GM10248 (cell line): ENCODE measurements at regions of chr14 and their contacts with region 1.

Region 1: GRCh38 chr14:75831458-75831857 is 150.3 kb downstream of the TGFB3 start:
- DNase-seq: no peak
- CTCF ChIP-seq: no peak

Region 2: GRCh38 chr14:75002392-75003249 is 828.8 kb before region 1 on chr14 and contains the start of gene EIF2B2:
- CTCF ChIA-PET with region 1: no interaction called
- POLR2A ChIA-PET with region 1: no interaction called
- DNase-seq: peak; percentile 98
- CTCF ChIP-seq: no peak

Region 3: GRCh38 chr14:75842551-75842950 is 11.1 kb after region 1 on chr14:
- CTCF ChIA-PET with region 1: interaction called, 12 read pairs
- POLR2A ChIA-PET with region 1: no interaction called
- DNase-seq: no peak
- CTCF ChIP-seq: no peak